IMR-90 (cell line): ENCODE measurements at regions of chr22 and their contacts with region 1.

Region 1: DNA sequence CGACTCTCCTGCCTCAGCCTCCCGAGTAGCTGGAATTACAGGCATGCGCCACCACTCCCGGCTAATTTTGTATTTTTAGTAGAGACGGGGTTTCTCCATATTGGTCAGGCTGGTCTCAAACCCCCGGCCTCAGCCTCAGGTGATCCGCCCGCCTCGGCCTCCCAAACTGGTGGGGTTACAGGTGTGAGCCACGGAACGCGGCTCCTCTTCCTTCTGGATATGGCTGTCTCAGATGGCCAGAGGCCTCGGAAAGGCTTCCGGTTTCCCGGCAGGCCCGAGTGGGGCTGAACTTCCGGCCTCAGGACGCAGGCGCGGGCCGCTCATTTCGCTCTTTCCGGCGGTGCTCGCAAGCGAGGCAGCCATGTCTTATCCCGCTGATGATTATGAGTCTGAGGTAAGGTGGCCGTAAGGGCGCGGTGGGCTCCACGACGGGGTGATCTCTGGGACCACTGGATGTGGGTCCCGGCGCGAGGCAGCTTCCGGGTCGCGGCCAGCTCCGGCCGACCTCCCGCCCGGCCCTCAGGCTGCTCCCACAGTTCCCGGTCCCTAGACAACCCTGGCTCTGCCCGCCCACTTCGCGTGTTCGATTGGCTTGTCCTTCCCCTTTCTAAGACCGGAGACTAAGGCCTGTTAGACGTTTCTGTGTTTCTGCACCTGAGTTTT is at the start of gene EIF3L:
- DNase-seq: peak; percentile 84
- ATAC-seq: peak; percentile 86
- H3K4me3 ChIP-seq: peak within 1 kb of the TSS; percentile 80
- H3K27ac ChIP-seq: peak within 1 kb of the TSS; percentile 81
- H3K4me1 ChIP-seq: peaks cover 2% of the 10 kb centered on the region; the same call in 1 of the 2 replicates
- H3K27me3 ChIP-seq: no peaks in the 10 kb centered on the region
- CTCF ChIP-seq: no peak
- POLR2A ChIP-seq: peak; percentile 90
- RAD21 ChIP-seq: no peak
- total RNA-seq, gene EIF3L: 464 and 593 TPM in 2 replicates

Region 2: GRCh38 chr22:37797874-37798500 is 51.2 kb before region 1 on chr22:
- CTCF ChIA-PET with region 1: no interaction called
- POLR2A ChIA-PET with region 1: no interaction called
- dilution Hi-C with region 1: no loop called
- in situ Hi-C with region 1: no loop called
- intact Hi-C with region 1: no loop called
- DNase-seq: no peak
- ATAC-seq: no peak
- H3K4me3 ChIP-seq: no peak overlapping the region
- H3K27ac ChIP-seq: no peak overlapping the region
- H3K4me1 ChIP-seq: no peaks in the 10 kb centered on the region
- H3K27me3 ChIP-seq: no peaks in the 10 kb centered on the region
- CTCF ChIP-seq: no peak
- POLR2A ChIP-seq: no peak
- RAD21 ChIP-seq: no peak

Region 3: GRCh38 chr22:37862570-37863325 is 13.5 kb after region 1 on chr22:
- CTCF ChIA-PET with region 1: interaction called, 7 read pairs
- POLR2A ChIA-PET with region 1: interaction called, 4 read pairs
- dilution Hi-C with region 1: no loop called
- in situ Hi-C with region 1: no loop called
- intact Hi-C with region 1: loop called (anchors 2 kb)
- DNase-seq: peak; percentile 29
- ATAC-seq: peak; percentile 8; the same call in 1 of the 2 replicates
- H3K4me3 ChIP-seq: no peak overlapping the region
- H3K27ac ChIP-seq: no peak overlapping the region
- H3K4me1 ChIP-seq: peaks cover 5% of the 10 kb centered on the region
- H3K27me3 ChIP-seq: no peaks in the 10 kb centered on the region
- CTCF ChIP-seq: no peak
- POLR2A ChIP-seq: no peak
- RAD21 ChIP-seq: no peak